ENCODE measurements at regions of chr6 and their contacts with region 1.

Region 1: GRCh38 chr6:74087899-74088298 is 391.9 kb downstream of the CD109 start:
- DNase-seq: no peak
- ATAC-seq: no peak
- H3K4me3 ChIP-seq: no peak overlapping the region
- H3K27ac ChIP-seq: no peak overlapping the region
- H3K4me1 ChIP-seq: no peaks in the 10 kb centered on the region
- H3K27me3 ChIP-seq: peaks cover 9% of the 10 kb centered on the region
- CTCF ChIP-seq: no peak

Region 2: GRCh38 chr6:73954881-73955280 is 133.0 kb before region 1 on chr6:
- intact Hi-C with region 1: no loop called
- DNase-seq: no peak
- ATAC-seq: no peak
- H3K4me3 ChIP-seq: no peak overlapping the region
- H3K27ac ChIP-seq: no peak overlapping the region
- H3K4me1 ChIP-seq: no peaks in the 10 kb centered on the region
- H3K27me3 ChIP-seq: no peaks in the 10 kb centered on the region
- CTCF ChIP-seq: no peak

Region 3: GRCh38 chr6:74137911-74138310 is 50.0 kb after region 1 on chr6:
- intact Hi-C with region 1: no loop called
- DNase-seq: no peak
- ATAC-seq: no peak
- H3K4me3 ChIP-seq: no peak overlapping the region
- H3K27ac ChIP-seq: no peak overlapping the region
- H3K4me1 ChIP-seq: no peaks in the 10 kb centered on the region
- H3K27me3 ChIP-seq: no peaks in the 10 kb centered on the region
- CTCF ChIP-seq: no peak

Region 4: GRCh38 chr6:75210885-75211739 is 1123.2 kb after region 1 on chr6:
- intact Hi-C with region 1: loop called (anchors 10 kb)
- DNase-seq: no peak
- ATAC-seq: peak; percentile 31
- H3K4me3 ChIP-seq: no peak overlapping the region
- H3K27ac ChIP-seq: no peak overlapping the region
- H3K4me1 ChIP-seq: peaks cover 19% of the 10 kb centered on the region
- H3K27me3 ChIP-seq: peaks cover 24% of the 10 kb centered on the region
- CTCF ChIP-seq: peak; percentile 88